Cardiac septum (tissue), 1 donor: ENCODE measurements at regions of chr12 and their contacts with region 1.

Region 1: DNA sequence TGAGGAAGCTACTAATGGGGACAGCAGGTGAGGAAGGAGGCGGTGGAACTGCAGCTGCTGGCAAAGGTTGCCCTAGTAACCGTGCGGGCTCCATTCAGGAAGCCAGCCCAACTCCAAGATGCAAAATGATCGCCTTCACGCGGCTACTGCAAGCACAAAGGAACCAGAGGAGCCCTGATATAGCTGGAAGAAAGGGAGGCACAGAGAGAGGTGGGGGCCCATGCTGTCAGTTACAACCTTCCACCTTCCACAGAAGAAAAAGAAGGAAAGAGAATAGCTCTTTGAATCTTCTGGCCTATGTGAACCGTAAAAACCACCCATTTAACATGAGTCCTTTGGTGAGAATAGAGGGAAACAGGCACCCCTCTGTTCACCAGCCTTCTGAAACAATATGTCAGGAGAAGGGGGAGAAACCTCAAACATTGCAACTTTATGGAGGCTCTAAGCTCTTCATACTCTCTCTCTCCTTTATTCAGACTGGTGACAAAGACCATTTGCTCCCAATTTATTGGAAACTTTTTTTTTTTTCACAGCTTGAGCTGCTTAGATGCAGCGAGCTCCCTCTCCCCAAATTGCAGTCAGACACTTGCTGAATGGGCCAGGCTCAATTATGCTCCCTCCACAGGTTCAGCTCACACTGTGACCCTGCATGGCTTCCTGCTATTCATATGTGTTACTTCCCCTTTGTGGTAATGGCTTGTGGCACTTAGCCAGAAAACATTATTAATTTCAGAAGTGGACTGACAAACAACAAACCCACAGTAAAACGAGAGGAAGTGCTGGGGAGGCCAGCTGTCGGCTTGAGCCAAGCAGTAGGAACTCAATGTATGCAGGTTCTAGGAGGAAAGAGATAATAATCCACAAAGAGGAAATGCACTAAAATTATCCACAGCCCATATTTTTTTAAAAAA is 6.2 kb downstream of the DUSP6 start:
- DNase-seq: peak; percentile 85

Region 2: GRCh38 chr12:88952562-88952942 is 393.5 kb before region 1 on chr12:
- intact Hi-C with region 1: no loop called
- DNase-seq: no peak

Region 3: DNA sequence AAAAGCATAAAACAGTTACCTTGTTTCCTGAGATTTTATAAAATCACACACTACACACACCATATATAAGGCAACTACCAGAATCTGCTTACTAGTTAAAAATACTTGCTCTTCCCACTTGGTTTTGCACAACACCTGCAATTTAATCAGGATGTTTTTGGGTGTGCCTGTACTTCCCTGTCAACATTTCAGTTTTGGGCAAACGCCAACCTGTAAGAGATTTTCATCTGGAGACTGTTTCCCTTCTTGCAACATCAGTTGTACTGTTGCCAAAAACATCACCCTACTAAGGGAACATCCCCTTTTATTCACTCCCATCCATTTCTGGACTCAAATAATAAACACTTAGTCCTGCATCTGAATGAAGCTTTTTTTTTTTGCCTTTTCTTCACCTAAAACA is 166.1 kb before region 1 on chr12:
- intact Hi-C with region 1: loop called (anchors 2 kb)
- DNase-seq: no peak

Region 4: DNA sequence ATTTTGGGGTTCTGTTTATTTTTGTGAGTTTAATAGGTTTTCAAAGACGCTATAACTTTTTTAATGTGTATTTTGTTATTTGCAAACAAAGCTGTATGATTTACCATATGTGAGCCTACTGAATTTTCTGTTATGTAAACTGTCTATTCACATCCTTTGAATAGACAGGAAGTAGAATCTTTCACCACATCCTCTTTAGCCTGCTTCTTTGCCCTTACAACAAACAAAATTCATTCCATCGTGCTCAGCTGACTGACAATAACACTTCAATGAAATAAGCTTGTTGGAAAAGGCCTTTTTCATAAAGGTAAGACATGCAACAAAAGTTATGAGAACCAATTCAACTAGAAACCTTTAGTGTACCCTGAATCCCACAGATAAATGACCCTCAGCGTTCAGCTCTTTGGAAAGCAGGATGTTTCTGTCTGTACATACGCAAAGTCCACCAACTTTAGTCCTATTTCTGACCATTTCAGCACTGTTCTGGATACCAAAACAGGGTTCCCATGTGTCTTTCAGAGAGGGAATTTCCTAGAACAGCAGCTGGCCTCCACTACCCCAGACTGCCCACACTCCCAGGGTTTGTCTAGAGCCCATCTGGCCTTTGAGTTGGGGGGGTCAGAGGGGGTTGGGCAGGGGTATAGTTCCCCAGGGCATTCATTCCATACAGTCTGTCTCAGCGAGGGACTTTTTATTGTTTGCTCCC is 65.1 kb before region 1 on chr12:
- intact Hi-C with region 1: loop called (anchors 5 kb)
- DNase-seq: no peak